GM18951 (cell line): ENCODE measurements at regions of chr9 and their contacts with region 1.

Region 1: GRCh38 chr9:113427629-113428028 is 17.1 kb downstream of the C9orf43 start:
- POLR2A ChIP-seq: no peak

Region 2: GRCh38 chr9:113299800-113300292 is 127.8 kb before region 1 on chr9:
- in situ Hi-C with region 1: no loop called
- POLR2A ChIP-seq: no peak

Region 3: GRCh38 chr9:113657703-113658544 is 230.3 kb after region 1 on chr9:
- in situ Hi-C with region 1: loop called (anchors 10 kb)
- POLR2A ChIP-seq: no peak